ENCODE measurements at regions of chr19 and their contacts with region 1.

Region 1: GRCh38 chr19:6297202-6297601 is 17.4 kb upstream of the MLLT1 start:
- DNase-seq: no peak
- H3K4me3 ChIP-seq: no peak overlapping the region
- H3K4me3 Mint-ChIP-seq: no peak overlapping the region
- H3K27ac ChIP-seq: no peak overlapping the region
- H3K27ac Mint-ChIP-seq: peak overlapping the region in 1 of 7 donors; percentile 64
- H3K4me1 ChIP-seq: no peaks in the 10 kb centered on the region
- H3K4me1 Mint-ChIP-seq: no peaks in the 10 kb centered on the region
- H3K27me3 ChIP-seq: no peaks in the 10 kb centered on the region
- H3K27me3 Mint-ChIP-seq: peaks cover 1 to 8% (median 3%) of the 10 kb centered on the region in 3 donors
- CTCF ChIP-seq: no peak

Region 2: DNA sequence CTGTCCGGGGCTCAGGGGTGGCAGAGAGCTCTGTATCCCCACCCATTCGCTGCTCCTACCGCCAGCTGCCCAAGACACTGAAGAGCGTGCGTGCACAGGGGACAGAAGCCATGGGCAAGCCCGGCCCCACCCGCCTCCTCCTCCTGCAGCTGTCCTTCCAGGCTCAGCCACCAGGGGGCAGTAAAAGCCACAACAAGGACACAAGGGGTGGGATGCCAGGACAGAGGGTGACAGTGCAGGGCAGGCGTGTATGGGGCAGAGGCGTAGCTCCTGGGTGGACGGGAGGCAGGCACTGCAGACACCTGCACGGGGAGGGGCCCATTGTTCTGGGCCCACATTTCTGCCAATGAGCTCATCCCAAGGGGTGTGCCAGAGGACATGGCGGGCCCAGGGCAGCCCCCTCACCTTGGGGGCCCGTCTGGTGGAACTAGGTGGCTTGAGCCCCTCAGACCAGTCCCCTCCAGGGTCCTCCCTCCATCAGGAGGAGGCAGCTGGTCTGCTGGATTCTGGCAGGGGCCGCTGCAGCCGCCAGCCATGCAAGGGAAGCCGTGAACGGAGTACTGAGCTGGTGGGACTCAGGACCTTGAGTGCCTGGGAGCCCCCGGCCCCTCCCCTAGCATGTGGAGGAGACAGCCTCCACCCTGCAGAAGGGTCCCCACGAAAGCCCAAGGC is 78.6 kb before region 1 on chr19:
- intact Hi-C with region 1: loop called (anchors 1 to 2 kb)
- DNase-seq: peak; percentile 59 to 77 (median 74)
- H3K4me3 ChIP-seq: no peak overlapping the region
- H3K4me3 Mint-ChIP-seq: no peak overlapping the region
- H3K27ac ChIP-seq: no peak overlapping the region
- H3K27ac Mint-ChIP-seq: peak overlapping the region in 3 of 7 donors; percentile 1 to 69 (median 32)
- H3K4me1 ChIP-seq: no peaks in the 10 kb centered on the region
- H3K4me1 Mint-ChIP-seq: peaks cover 4% of the 10 kb centered on the region
- H3K27me3 ChIP-seq: no peaks in the 10 kb centered on the region
- H3K27me3 Mint-ChIP-seq: peaks cover 0 to 3% (median 0%) of the 10 kb centered on the region in 3 donors
- CTCF ChIP-seq: peak; percentile 98

Measured in CD14-positive monocyte (primary cell).